ENCODE measurements at regions of chr3 and their contacts with region 1.

Region 1: DNA sequence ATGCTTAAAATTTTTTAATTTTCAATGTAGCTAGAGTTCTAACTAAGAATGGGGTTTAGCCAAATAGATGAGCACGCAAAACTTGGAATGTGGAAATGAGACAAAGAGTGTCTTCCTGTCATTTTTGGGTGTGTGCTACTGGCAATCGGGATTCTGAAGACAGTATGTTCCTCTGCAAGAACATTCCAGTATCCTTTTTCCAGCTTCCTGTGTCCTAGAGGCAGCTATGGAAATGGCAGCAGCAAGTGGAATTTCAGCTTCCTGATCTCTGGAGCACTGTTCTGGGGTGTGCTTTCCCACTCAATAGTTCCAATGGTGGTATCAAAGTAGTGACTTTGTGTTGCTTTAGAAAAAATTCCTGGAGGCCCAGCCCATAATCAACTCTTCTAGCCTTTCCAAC is 642.9 kb upstream of the KCNMB2 start:
- DNase-seq: no peak
- H3K4me3 ChIP-seq: no peak overlapping the region
- H3K27ac ChIP-seq: no peak overlapping the region
- H3K4me1 ChIP-seq: no peaks in the 10 kb centered on the region
- H3K27me3 ChIP-seq: no peaks in the 10 kb centered on the region
- CTCF ChIP-seq: no peak

Region 2: GRCh38 chr3:177589911-177590381 is 303.4 kb before region 1 on chr3:
- CTCF ChIA-PET with region 1: interaction called, 13 read pairs
- POLR2A ChIA-PET with region 1: no interaction called
- intact Hi-C with region 1: no loop called
- DNase-seq: peak; percentile 51 to 98
- H3K4me3 ChIP-seq: no peak overlapping the region
- H3K27ac ChIP-seq: peak overlapping the region; percentile 83
- H3K4me1 ChIP-seq: peaks cover 49% of the 10 kb centered on the region
- H3K27me3 ChIP-seq: no peaks in the 10 kb centered on the region
- CTCF ChIP-seq: no peak

Region 3: DNA sequence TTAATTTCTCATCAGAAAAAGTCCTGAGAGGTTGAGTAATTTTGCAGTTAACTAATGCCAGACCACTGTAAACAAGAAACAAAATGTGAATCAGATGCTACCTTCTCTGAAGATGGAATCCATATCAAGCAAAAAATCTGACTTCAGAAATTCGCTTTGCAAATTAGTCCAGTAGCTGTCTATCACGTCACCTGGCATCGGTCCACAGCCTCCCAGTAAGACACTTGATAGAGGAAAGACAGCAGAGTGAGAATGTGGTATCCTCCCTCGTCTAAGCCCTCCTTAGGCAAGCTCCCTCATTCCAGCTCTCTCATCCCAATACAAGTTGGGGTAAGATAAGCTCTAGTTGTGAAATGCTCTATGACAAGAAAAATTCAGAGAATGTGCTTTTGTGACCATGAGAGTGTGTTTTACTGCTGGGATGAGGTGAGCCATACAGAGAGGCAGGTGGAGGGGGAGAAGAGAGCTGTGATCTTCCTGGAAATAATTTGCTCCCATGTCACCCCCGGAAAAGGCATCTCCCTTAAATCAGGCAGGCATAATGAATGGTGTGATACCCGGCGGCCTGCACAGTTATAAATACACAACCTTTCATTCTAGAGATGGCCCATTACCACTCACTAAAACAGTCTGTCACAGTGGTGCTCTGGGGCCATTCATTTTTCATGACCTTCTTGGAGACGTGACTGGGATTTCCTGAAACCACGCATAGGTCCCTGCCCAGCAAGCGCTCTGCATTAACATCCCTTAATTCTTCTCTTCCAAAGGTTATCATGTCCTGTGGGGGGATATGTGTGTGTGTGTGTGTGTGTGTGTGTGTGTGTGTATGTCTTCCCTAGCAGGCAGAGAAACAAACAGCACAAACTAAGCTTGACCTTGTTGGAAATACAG is 40.9 kb after region 1 on chr3:
- CTCF ChIA-PET with region 1: no interaction called
- POLR2A ChIA-PET with region 1: interaction called, 10 read pairs
- intact Hi-C with region 1: no loop called
- DNase-seq: no peak
- H3K4me3 ChIP-seq: no peak overlapping the region
- H3K27ac ChIP-seq: no peak overlapping the region
- H3K4me1 ChIP-seq: peaks cover 4% of the 10 kb centered on the region
- H3K27me3 ChIP-seq: no peaks in the 10 kb centered on the region
- CTCF ChIP-seq: no peak

Measured in PC-9 (cell line).